Mammary epithelial cell (primary cell): ENCODE measurements at regions of chr12 and their contacts with region 1.

Region 1: DNA sequence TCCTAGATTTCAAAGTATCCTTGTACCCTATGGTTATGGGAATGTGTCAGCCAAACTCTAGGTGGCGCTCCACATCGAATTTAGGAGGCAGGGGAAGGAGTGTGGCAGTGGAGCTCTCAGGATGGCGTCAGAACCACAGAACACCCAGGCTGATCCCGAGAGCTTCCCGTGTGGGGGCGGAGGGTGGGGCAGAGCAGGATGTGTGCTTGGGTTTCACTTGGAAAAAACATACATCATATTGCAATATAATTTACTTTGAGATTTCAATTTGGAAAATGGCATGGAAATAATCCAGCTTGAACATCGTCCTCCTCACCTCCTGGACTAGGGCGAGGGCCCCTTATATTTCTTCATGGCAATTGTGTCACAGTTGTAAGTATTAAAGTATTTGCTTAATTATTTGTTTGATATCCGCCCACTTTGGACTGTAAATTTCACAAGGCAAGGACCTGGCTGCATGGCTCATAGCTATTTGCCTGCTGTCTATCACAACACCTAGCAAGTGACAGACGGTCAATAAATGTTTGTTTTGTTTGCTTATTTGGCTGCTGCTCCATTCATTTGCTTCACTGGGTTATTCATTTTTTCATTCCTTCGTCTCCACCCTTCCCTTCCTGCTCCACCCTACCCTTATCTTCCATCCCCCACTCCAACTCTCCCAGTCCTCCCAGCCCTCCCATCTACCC is 221.5 kb upstream of the HMGA2 start:
- DNase-seq: peak; percentile 94
- H3K4me3 ChIP-seq: peak overlapping the region; percentile 39 to 60 (median 43)
- H3K27ac ChIP-seq: peak overlapping the region; percentile 98
- H3K4me1 ChIP-seq: peaks cover 48% of the 10 kb centered on the region
- H3K27me3 ChIP-seq: no peaks in the 10 kb centered on the region
- CTCF ChIP-seq: peak; percentile 76 to 84

Region 2: DNA sequence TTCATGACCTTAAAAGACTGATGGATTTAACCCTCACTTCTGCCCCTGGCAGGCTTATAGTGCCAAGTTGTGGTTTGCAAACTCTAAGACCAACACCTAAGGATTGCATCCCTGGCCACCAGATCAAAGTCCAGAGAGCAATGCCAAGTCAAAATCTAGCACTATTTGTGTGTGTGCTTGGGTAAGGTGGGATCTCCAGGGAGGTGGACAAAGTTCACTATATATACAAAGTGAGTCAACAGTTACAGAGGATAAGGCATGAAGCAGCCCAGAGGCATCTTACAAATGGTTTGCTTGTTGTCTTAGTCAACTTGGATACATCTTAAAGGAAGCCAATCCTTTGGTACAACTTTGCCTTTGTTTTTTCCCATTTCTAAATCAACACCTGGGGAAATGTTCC is 186.9 kb before region 1 on chr12:
- CTCF ChIA-PET with region 1: no interaction called
- dilution Hi-C with region 1: no loop called
- in situ Hi-C with region 1: no loop called
- intact Hi-C with region 1: no loop called
- DNase-seq: no peak
- H3K4me3 ChIP-seq: no peak overlapping the region
- H3K27ac ChIP-seq: no peak overlapping the region
- H3K4me1 ChIP-seq: peaks cover 10% of the 10 kb centered on the region
- H3K27me3 ChIP-seq: no peaks in the 10 kb centered on the region
- CTCF ChIP-seq: no peak

Region 3: DNA sequence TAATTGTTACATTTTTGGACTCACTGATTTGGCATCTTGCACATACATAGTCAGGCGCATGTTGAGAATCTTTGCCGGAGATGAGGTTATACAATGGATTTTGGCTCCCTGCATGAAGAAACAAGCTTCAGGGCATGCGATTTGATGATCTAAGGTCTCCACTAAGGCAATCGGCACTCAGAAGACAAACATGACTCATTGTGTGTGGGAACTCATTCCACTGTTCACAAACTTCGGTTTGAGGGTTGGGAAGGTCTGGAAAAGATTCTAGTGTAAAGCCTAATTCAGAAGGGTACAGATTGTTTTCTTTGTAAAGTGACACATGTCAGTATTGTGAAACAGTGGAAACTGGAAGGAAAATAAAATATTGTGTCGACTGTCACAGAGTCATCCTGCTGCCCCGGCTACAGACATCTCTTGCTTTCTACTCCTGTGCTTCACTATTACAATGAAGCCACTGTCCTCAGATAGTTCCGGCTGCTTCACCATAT is 28.9 kb after region 1 on chr12:
- CTCF ChIA-PET with region 1: no interaction called
- dilution Hi-C with region 1: no loop called
- in situ Hi-C with region 1: no loop called
- intact Hi-C with region 1: loop called (anchors 1 kb)
- DNase-seq: peak; percentile 100
- H3K4me3 ChIP-seq: no peak overlapping the region
- H3K27ac ChIP-seq: peak overlapping the region; percentile 100
- H3K4me1 ChIP-seq: peaks cover 54% of the 10 kb centered on the region
- H3K27me3 ChIP-seq: no peaks in the 10 kb centered on the region
- CTCF ChIP-seq: no peak

Region 4: DNA sequence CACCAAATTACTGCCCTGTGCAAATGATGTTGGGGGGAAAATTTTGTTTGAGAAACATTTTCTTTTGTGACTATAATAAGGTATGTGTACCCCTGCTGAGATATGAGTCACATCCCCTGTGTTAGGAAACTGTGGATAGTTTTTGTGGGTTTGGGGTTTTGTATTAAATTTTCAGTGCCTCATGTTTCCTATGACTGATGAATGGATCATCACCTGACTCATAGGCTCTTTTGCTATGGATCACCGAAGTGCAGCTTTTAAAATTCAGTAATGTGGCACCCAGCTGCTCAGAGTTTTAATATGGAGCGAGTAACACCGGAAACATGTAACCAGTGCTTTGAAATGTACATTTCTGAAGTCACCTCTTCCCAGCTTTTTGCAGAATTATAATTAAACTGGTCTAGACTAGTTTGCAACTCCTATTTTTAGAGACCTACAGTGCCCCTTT is 54.2 kb after region 1 on chr12:
- CTCF ChIA-PET with region 1: interaction called, 3 read pairs
- dilution Hi-C with region 1: no loop called
- in situ Hi-C with region 1: no loop called
- intact Hi-C with region 1: loop called (anchors 1 kb)
- DNase-seq: peak; percentile 98
- H3K4me3 ChIP-seq: no peak overlapping the region
- H3K27ac ChIP-seq: peak overlapping the region; percentile 97
- H3K4me1 ChIP-seq: peaks cover 31% of the 10 kb centered on the region
- H3K27me3 ChIP-seq: no peaks in the 10 kb centered on the region
- CTCF ChIP-seq: no peak

Region 5: GRCh38 chr12:65695113-65695865 is 92.5 kb after region 1 on chr12:
- CTCF ChIA-PET with region 1: interaction called, 12 read pairs
- dilution Hi-C with region 1: no loop called
- in situ Hi-C with region 1: no loop called
- intact Hi-C with region 1: loop called (anchors 2 kb)
- DNase-seq: peak; percentile 98
- H3K4me3 ChIP-seq: no peak overlapping the region
- H3K27ac ChIP-seq: peak overlapping the region; percentile 67
- H3K4me1 ChIP-seq: peaks cover 28% of the 10 kb centered on the region
- H3K27me3 ChIP-seq: no peaks in the 10 kb centered on the region
- CTCF ChIP-seq: no peak

Region 6: DNA sequence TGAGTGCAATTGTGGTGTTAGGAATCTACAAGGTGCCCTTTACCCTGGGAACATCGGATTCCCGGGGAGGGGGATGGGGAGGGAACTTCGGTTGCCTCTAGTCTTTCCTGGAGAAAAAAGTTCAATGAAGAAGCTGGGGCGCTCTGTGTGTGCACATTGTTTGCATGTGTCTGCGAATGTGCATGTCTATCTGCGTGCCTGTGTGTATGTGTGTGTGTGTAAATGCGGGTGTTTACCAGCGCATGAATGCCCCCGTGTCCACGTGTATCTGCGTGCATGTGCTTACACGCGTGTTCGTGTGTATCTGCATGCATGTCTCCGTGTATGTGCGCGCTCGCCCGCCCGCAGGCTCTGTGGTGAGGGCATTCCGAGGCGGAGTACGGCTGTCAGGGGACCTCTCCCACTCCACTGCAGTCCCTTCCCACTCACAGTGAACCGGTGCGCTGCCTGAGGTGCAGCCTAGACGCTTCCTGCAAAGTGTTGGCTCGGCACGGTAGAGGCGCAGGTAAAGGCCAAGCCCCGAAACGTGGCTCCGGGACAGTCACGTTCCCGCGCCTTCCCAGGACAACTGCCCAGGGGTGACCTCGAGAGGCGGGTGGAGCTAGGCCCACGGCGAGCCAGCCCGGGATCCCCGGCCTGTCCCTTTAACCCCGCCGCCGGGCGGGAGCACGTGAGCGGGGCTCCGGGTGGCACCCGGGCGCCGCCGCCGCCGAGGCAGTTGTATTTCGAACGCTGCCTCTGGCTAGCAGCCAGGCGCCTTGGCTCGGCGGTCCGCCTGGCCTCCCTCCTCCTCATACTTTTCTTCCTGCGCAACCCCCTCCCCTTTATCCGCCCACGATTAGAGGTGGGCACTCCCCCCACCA is 221.0 kb after region 1 on chr12:
- CTCF ChIA-PET with region 1: no interaction called
- dilution Hi-C with region 1: no loop called
- in situ Hi-C with region 1: loop called in 1 of 2 experiments (anchors 25 kb)
- intact Hi-C with region 1: loop called (anchors 1 kb)
- DNase-seq: peak; percentile 81
- H3K4me3 ChIP-seq: peak overlapping the region; percentile 70 to 85 (median 80)
- H3K27ac ChIP-seq: peak overlapping the region; percentile 97
- H3K4me1 ChIP-seq: peaks cover 32% of the 10 kb centered on the region
- H3K27me3 ChIP-seq: no peaks in the 10 kb centered on the region
- CTCF ChIP-seq: no peak

Region 7: DNA sequence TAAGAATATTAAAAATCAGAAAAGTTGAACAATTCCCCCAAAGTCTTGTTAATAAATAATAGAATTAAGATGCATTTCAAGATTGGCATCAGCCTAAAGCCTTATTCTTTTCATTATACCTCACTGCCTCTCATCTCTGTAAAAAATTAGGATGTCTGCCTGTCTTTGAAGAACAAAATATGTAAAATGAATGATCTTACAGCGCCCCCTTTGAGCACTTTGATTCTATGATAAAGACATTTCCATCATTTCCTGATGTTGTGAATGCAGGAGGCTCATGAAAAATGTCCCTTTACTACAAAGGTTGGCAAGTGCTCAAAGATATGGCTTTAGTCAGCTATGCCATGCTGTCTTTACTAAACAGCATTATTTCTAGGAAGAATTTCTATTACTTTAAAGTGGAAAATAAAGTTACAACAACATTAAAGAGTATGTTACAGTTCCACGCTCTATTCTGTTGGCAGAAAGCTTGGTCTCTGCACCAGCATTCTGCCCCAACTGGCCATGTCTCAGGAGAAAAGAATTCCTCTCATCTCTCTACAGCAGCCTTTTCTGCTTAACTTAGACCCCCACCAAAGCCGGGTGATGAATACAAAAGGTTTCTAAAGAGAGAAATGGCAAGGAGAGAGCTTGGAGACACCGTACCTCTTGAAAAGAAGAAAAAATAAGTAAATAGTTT is 432.7 kb after region 1 on chr12:
- CTCF ChIA-PET with region 1: interaction called, 5 read pairs
- dilution Hi-C with region 1: no loop called
- in situ Hi-C with region 1: no loop called
- intact Hi-C with region 1: loop called (anchors 2 kb)
- DNase-seq: peak; percentile 52
- H3K4me3 ChIP-seq: no peak overlapping the region
- H3K27ac ChIP-seq: peak overlapping the region; percentile 26
- H3K4me1 ChIP-seq: peaks cover 19% of the 10 kb centered on the region
- H3K27me3 ChIP-seq: no peaks in the 10 kb centered on the region
- CTCF ChIP-seq: peak; percentile 55 to 74